ENCODE measurements at regions of chr2 and their contacts with region 1.

Region 1: DNA sequence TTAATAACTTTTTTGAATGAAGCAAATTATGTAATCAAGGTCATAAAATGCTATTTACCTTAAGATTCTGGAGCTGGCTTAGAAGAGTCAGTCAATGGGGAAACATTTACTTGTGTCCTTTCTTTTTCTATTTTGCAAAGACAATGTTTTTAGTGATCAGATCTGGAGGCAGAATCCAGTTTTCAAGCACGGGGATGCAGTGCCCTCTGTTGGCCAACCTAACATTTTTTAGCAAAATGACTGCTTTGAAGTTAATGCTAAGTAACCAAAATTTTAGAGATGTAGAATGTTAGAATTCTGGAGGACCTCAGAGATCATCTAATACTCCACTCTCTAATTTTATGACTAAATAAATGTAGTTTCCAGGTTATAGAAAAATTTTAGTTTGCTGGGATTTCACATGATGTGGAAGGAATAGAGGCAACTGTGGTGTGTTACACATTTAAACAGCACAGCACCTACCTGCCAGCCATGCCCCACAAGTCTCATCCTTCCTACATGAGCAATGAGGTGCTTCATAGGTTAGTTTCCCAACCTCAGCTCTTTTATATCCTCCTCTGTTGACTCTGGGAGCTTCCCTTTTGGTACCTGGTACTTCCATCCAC is 23.6 kb upstream of the SLC9A4 start:
- DNase-seq: peak; percentile 40 to 54
- H3K4me3 ChIP-seq: no peak overlapping the region
- H3K4me3 Mint-ChIP-seq: no peak overlapping the region
- H3K27ac Mint-ChIP-seq: no peak overlapping the region
- H3K4me1 ChIP-seq: no peaks in the 10 kb centered on the region
- H3K4me1 Mint-ChIP-seq: no peaks in the 10 kb centered on the region
- H3K27me3 ChIP-seq: no peaks in the 10 kb centered on the region; the same call in 1 of the 2 replicates
- H3K27me3 Mint-ChIP-seq: no peaks in the 10 kb centered on the region
- CTCF ChIP-seq: peak; percentile 72 to 74

Region 2: GRCh38 chr2:101883863-101884262 is 565.6 kb before region 1 on chr2:
- CTCF ChIA-PET with region 1: no interaction called
- POLR2A ChIA-PET with region 1: no interaction called
- intact Hi-C with region 1: loop called (anchors 5 kb)
- DNase-seq: peak in 1 of 2 experiments; percentile 62
- H3K4me3 ChIP-seq: no peak overlapping the region
- H3K4me3 Mint-ChIP-seq: no peak overlapping the region
- H3K27ac Mint-ChIP-seq: no peak overlapping the region
- H3K4me1 ChIP-seq: no peaks in the 10 kb centered on the region
- H3K4me1 Mint-ChIP-seq: peaks cover 7% of the 10 kb centered on the region
- H3K27me3 ChIP-seq: no peaks in the 10 kb centered on the region
- H3K27me3 Mint-ChIP-seq: no peaks in the 10 kb centered on the region
- CTCF ChIP-seq: peak; percentile 63 to 73

Region 3: GRCh38 chr2:102251042-102251848 is 198.2 kb before region 1 on chr2:
- CTCF ChIA-PET with region 1: no interaction called
- POLR2A ChIA-PET with region 1: no interaction called
- intact Hi-C with region 1: loop called (anchors 5 kb)
- DNase-seq: no peak
- H3K4me3 ChIP-seq: no peak overlapping the region
- H3K4me3 Mint-ChIP-seq: peak overlapping the region; percentile 19
- H3K27ac Mint-ChIP-seq: no peak overlapping the region
- H3K4me1 ChIP-seq: no peaks in the 10 kb centered on the region
- H3K4me1 Mint-ChIP-seq: no peaks in the 10 kb centered on the region
- H3K27me3 ChIP-seq: no peaks in the 10 kb centered on the region
- H3K27me3 Mint-ChIP-seq: peaks cover 2% of the 10 kb centered on the region
- CTCF ChIP-seq: peak in 1 of 2 experiments; percentile 34

Region 4: GRCh38 chr2:102703748-102704147 is 254.3 kb after region 1 on chr2:
- CTCF ChIA-PET with region 1: interaction called, 5 read pairs
- POLR2A ChIA-PET with region 1: no interaction called
- intact Hi-C with region 1: loop called (anchors 5 kb)
- DNase-seq: peak in 1 of 2 experiments; percentile 39
- H3K4me3 ChIP-seq: no peak overlapping the region
- H3K4me3 Mint-ChIP-seq: no peak overlapping the region
- H3K27ac Mint-ChIP-seq: no peak overlapping the region
- H3K4me1 ChIP-seq: no peaks in the 10 kb centered on the region; the same call in 1 of the 2 replicates
- H3K4me1 Mint-ChIP-seq: peaks cover 17% of the 10 kb centered on the region
- H3K27me3 ChIP-seq: no peaks in the 10 kb centered on the region
- H3K27me3 Mint-ChIP-seq: no peaks in the 10 kb centered on the region
- CTCF ChIP-seq: peak in 1 of 2 experiments; percentile 60

Region 5: GRCh38 chr2:102806250-102806837 is 356.9 kb after region 1 on chr2:
- CTCF ChIA-PET with region 1: interaction called, 3 read pairs
- POLR2A ChIA-PET with region 1: no interaction called
- intact Hi-C with region 1: loop called (anchors 1 kb)
- DNase-seq: peak; percentile 66 to 80
- H3K4me3 ChIP-seq: no peak overlapping the region
- H3K4me3 Mint-ChIP-seq: no peak overlapping the region
- H3K27ac Mint-ChIP-seq: no peak overlapping the region
- H3K4me1 ChIP-seq: peaks cover 10% of the 10 kb centered on the region
- H3K4me1 Mint-ChIP-seq: no peaks in the 10 kb centered on the region
- H3K27me3 ChIP-seq: no peaks in the 10 kb centered on the region
- H3K27me3 Mint-ChIP-seq: no peaks in the 10 kb centered on the region
- CTCF ChIP-seq: peak; percentile 85 to 90

Measured in Caco-2 (cell line).